Sciatic nerve (tissue), 2 donors: ENCODE measurements at regions of chr2 and their contacts with region 1.

Region 1: DNA sequence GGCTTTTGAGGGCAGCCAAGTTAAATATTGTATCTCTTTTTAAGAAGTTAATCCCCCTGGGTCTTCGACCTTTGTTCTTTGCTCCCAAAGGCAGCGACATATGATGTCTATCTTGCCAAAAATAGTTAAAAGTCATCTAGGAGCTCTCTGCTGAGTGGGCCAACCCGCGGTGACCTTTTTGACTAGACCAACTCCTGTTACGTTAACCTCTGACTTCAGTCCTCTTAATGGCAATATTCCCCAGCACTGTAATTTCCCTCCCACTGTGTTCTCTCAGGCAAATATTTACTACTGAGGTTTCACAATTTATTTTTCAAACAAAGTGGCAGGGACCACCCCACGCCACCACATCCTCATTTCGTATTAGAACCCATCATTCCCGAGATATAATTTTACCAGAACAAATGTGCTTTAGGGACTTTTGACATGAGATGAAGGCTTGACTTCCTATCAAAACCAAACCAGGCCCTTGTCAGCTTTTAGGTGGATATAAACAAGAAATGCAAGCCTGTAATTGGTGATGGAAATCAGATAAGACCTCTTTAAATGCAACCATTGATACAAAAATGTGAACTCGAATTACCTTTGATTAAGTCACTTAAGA is 764.7 kb downstream of the SATB2 start:
- DNase-seq: no peak
- ATAC-seq: no peak

Region 2: DNA sequence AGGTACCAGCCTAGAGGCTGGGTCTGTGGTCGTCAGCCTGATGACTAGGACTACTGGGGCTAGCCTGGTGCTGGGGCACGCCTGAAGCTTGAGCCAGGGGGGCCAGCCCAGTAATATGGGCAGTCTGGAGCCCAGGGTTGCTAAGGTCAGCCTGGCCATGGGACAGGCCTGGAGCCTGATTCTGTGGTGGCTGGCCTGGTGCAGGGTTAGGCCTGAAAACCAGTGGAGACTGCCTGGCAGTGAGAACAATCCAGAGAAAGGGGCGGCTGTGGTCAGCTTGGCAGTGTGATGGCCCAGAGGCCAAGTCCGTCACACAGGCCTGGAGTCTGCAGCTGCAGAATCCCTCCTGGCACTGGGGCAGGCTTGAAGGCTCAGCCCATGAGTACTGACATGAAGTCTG is 318.9 kb after region 1 on chr2:
- intact Hi-C with region 1: loop called (anchors 5 kb)
- DNase-seq: no peak
- ATAC-seq: peak; percentile 32